Left cardiac atrium (tissue), 4 donors: ENCODE measurements at regions of chr15 and their contacts with region 1.

Region 1: DNA sequence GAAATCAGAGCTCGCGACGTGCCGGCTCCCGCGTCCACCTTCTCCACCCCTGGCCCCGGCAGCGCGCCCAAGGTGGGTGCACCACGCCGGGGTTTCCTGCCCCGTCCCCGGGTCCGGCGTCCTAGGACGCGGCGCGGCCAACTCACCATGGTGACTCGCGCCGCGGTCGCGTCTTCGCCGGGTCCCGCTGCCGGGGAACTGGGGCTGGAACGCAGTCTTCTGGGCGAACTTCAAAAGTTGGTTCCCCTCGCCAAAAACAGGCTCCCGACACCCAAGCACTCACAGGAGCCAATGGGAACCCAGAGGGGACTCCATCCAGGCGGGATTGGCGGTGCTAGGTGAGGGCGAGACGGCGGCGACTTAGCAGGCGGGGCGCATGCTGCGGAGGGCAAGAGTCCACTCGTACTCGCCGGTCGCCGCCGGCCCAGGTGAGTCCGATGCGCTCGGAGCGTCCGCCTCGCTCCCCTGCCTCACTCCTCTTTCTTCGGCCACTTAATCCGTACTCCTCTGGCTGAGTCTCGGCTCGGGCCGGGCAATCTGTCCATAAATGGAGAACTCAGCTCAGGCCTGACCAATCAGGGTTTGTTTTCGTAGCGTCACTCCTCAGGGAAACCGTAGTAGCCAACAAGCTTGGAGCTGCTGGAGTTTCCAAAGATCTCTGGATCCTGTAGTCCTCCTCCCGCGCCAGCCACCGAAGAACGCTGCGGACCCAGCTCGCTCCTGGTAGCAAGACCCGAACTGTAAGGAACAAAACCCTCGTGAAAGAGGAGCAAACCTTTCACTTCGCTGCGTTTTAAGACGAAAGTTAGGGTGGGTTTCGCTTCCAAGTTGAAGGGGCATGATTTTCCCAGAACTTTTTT is at the start of gene MYO1E:
- DNase-seq: peak; percentile 87
- ATAC-seq: peak; percentile 96 to 98
- total RNA-seq, gene MYO1E: 32.1 to 49.5 TPM

Region 2: GRCh38 chr15:59221511-59222505 is 150.8 kb before region 1 on chr15:
- intact Hi-C with region 1: loop called in 1 of 2 experiments (anchors 10 kb)
- DNase-seq: no peak
- ATAC-seq: peak in 1 of 2 donors; percentile 39

Region 3: GRCh38 chr15:59437817-59438562 is 65.4 kb after region 1 on chr15 and contains the start of gene FAM81A:
- intact Hi-C with region 1: loop called in 1 of 2 experiments (anchors 5 kb)
- DNase-seq: peak; percentile 87
- ATAC-seq: peak; percentile 96
- total RNA-seq, gene FAM81A: 2.4 to 3.7 TPM